HepG2 (cell line): ENCODE measurements at regions of chrX and their contacts with region 1.

Region 1: GRCh38 chrX:23782863-23783568 is at the start of gene SAT1:
- DNase-seq: peak; percentile 88
- ATAC-seq: peak; percentile 95
- H3K4me3 ChIP-seq: peak within 1 kb of the TSS; percentile 87 to 93 (median 88)
- H3K27ac ChIP-seq: peak within 1 kb of the TSS; percentile 82
- H3K4me1 ChIP-seq: peaks cover 33% of the 10 kb centered on the region
- H3K27me3 ChIP-seq: no peaks in the 10 kb centered on the region; a peak in 1 of 5 replicates
- CTCF ChIP-seq: peak; percentile 84
- EP300 ChIP-seq: no peak
- POLR2A ChIP-seq: peak; percentile 98 to 99
- RAD21 ChIP-seq: peak; percentile 86
- total RNA-seq, gene SAT1: 216 and 237 TPM in 2 replicates

Region 2: DNA sequence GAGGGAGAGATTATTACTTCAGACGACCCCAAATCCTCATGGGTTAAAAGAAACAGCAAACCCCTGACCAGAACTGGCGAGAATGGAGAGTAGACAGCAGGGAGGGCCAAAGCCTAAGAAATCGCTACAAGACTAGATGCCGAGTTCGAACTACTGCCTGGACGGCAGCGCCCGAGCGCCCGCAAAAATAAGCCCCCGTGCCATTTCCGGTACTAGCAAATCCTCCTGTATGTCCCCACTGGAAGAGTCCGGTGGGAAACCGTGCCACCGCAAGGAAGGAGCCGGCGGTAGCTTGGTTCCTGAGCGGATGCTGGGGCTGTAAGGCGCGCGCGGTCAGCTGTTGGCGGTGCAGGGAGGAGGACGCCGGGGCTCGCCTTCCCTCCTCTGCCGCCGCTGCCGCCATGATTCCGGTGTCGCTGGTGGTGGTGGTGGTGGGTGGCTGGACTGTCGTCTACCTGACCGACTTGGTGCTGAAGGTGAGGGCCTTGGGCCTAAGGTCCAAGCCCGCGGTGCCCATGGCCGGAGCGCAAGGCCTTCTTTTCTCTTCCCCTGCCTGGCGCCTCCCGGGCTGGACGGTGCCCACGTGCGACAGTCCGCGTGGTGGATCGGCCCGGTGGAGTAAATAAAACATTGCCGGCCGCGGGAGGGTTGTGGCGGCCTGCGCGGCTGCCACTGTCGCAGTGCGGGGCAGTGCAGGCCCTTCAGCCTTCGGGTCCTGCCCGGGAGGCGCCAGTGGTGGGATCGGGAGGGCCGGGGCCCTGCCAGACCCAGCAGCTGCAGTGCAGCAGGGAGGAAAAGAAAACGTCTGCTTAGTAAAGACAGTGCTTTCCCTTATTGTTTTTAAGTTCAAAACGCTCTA is 1943.5 kb before region 1 on chrX and contains the start of gene MBTPS2:
- CTCF ChIA-PET with region 1: no interaction called
- POLR2A ChIA-PET with region 1: no interaction called
- in situ Hi-C with region 1: no loop called
- intact Hi-C with region 1: loop called (anchors 10 kb)
- DNase-seq: peak; percentile 69
- ATAC-seq: peak; percentile 92
- H3K4me3 ChIP-seq: peak within 1 kb of the TSS; percentile 74 to 87 (median 83)
- H3K27ac ChIP-seq: peak within 1 kb of the TSS; percentile 78
- H3K4me1 ChIP-seq: peaks cover 31% of the 10 kb centered on the region
- H3K27me3 ChIP-seq: no peaks in the 10 kb centered on the region
- CTCF ChIP-seq: peak; percentile 37; the same call in 1 of the 2 replicates
- EP300 ChIP-seq: no peak
- POLR2A ChIP-seq: peak; percentile 58 to 75
- RAD21 ChIP-seq: peak; percentile 43; the same call in 1 of the 2 replicates
- total RNA-seq, gene MBTPS2: 5.7 and 7.7 TPM in 2 replicates

Region 3: GRCh38 chrX:23251043-23251442 is 532.0 kb before region 1 on chrX:
- CTCF ChIA-PET with region 1: no interaction called
- POLR2A ChIA-PET with region 1: no interaction called
- in situ Hi-C with region 1: no loop called
- intact Hi-C with region 1: no loop called
- DNase-seq: no peak
- ATAC-seq: no peak
- H3K4me3 ChIP-seq: no peak overlapping the region
- H3K27ac ChIP-seq: no peak overlapping the region
- H3K4me1 ChIP-seq: no peaks in the 10 kb centered on the region
- H3K27me3 ChIP-seq: no peaks in the 10 kb centered on the region
- CTCF ChIP-seq: no peak
- EP300 ChIP-seq: no peak
- POLR2A ChIP-seq: no peak
- RAD21 ChIP-seq: no peak

Region 4: GRCh38 chrX:23742697-23743622 is 40.1 kb before region 1 on chrX and contains the start of gene ACOT9:
- CTCF ChIA-PET with region 1: no interaction called
- POLR2A ChIA-PET with region 1: interaction called, 12 read pairs
- in situ Hi-C with region 1: no loop called
- intact Hi-C with region 1: no loop called
- DNase-seq: peak; percentile 88
- ATAC-seq: peak; percentile 98
- H3K4me3 ChIP-seq: peak within 1 kb of the TSS; percentile 79
- H3K27ac ChIP-seq: peak within 1 kb of the TSS; percentile 62
- H3K4me1 ChIP-seq: peaks cover 10% of the 10 kb centered on the region; the same call in 1 of the 2 replicates
- H3K27me3 ChIP-seq: no peaks in the 10 kb centered on the region
- CTCF ChIP-seq: peak; percentile 3; the same call in 1 of the 2 replicates
- EP300 ChIP-seq: no peak
- POLR2A ChIP-seq: peak; percentile 48 to 64
- RAD21 ChIP-seq: no peak
- total RNA-seq, gene ACOT9: 35.1 and 36.9 TPM in 2 replicates

Region 5: GRCh38 chrX:23770142-23770541 is 12.9 kb before region 1 on chrX:
- CTCF ChIA-PET with region 1: no interaction called
- POLR2A ChIA-PET with region 1: interaction called, 11 read pairs
- in situ Hi-C with region 1: no loop called
- intact Hi-C with region 1: no loop called
- DNase-seq: no peak
- ATAC-seq: peak; percentile 74
- H3K4me3 ChIP-seq: no peak overlapping the region
- H3K27ac ChIP-seq: peak overlapping the region; percentile 51
- H3K4me1 ChIP-seq: peaks cover 27% of the 10 kb centered on the region
- H3K27me3 ChIP-seq: no peaks in the 10 kb centered on the region
- CTCF ChIP-seq: no peak
- EP300 ChIP-seq: no peak
- POLR2A ChIP-seq: no peak
- RAD21 ChIP-seq: no peak

Region 6: DNA sequence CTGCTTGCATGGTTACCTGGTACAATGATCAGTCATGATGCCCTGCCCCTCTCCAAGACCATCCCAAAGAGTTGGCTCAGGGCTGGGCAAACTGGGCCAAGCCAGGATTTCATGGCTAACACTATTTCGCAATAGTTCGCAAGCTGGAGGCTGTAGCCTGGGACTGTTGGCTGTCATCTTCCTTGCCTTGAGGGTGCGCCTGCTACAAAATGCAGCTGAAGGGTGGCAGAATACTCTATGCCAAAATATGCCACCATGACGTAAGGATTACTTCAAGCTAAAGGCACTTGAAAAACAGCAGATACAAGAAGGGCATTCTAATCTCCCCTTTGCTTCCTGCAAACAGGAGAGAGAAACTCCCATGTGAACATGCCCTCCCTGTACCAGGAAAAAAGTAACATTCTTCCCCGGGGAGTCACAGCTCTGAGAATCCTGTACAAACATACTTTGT is 20.9 kb after region 1 on chrX:
- CTCF ChIA-PET with region 1: no interaction called
- POLR2A ChIA-PET with region 1: interaction called, 42 read pairs
- in situ Hi-C with region 1: no loop called
- intact Hi-C with region 1: no loop called
- DNase-seq: peak; percentile 70
- ATAC-seq: peak; percentile 30; the same call in 2 of the 3 replicates
- H3K4me3 ChIP-seq: no peak overlapping the region
- H3K27ac ChIP-seq: peak overlapping the region; percentile 65
- H3K4me1 ChIP-seq: peaks cover 46% of the 10 kb centered on the region
- H3K27me3 ChIP-seq: no peaks in the 10 kb centered on the region
- CTCF ChIP-seq: no peak
- EP300 ChIP-seq: 0 out of 4 replicates have a peak, but pooled peaks of 1 of the 2 experiments have one; percentile 9
- POLR2A ChIP-seq: no peak
- RAD21 ChIP-seq: no peak

Region 7: GRCh38 chrX:23844502-23845138 is 61.6 kb after region 1 on chrX:
- CTCF ChIA-PET with region 1: no interaction called
- POLR2A ChIA-PET with region 1: interaction called, 45 read pairs
- in situ Hi-C with region 1: no loop called
- intact Hi-C with region 1: loop called (anchors 2 kb)
- DNase-seq: peak; percentile 65
- ATAC-seq: peak; percentile 63
- H3K4me3 ChIP-seq: peak overlapping the region in 2 of 3 experiments; percentile 20 to 55; a peak in 3 of 6 replicates
- H3K27ac ChIP-seq: peak overlapping the region; percentile 93
- H3K4me1 ChIP-seq: peaks cover 63% of the 10 kb centered on the region
- H3K27me3 ChIP-seq: no peaks in the 10 kb centered on the region
- CTCF ChIP-seq: no peak
- EP300 ChIP-seq: peak in 1 of 2 experiments; percentile 81; a peak in 2 of 4 replicates
- POLR2A ChIP-seq: no peak
- RAD21 ChIP-seq: no peak

Region 8: GRCh38 chrX:23901805-23902204 is 118.8 kb after region 1 on chrX:
- CTCF ChIA-PET with region 1: interaction called, 27 read pairs
- POLR2A ChIA-PET with region 1: interaction called, 91 read pairs
- in situ Hi-C with region 1: loop called (anchors 5 kb)
- intact Hi-C with region 1: loop called (anchors 1 kb)
- DNase-seq: peak; percentile 77
- ATAC-seq: peak; percentile 96
- H3K4me3 ChIP-seq: peak overlapping the region in 1 of 3 experiments; percentile 33; a peak in 1 of 6 replicates
- H3K27ac ChIP-seq: peak overlapping the region; percentile 64
- H3K4me1 ChIP-seq: peaks cover 66% of the 10 kb centered on the region
- H3K27me3 ChIP-seq: no peaks in the 10 kb centered on the region
- CTCF ChIP-seq: peak; percentile 82
- EP300 ChIP-seq: no peak
- POLR2A ChIP-seq: no peak
- RAD21 ChIP-seq: peak; percentile 81

Region 9: DNA sequence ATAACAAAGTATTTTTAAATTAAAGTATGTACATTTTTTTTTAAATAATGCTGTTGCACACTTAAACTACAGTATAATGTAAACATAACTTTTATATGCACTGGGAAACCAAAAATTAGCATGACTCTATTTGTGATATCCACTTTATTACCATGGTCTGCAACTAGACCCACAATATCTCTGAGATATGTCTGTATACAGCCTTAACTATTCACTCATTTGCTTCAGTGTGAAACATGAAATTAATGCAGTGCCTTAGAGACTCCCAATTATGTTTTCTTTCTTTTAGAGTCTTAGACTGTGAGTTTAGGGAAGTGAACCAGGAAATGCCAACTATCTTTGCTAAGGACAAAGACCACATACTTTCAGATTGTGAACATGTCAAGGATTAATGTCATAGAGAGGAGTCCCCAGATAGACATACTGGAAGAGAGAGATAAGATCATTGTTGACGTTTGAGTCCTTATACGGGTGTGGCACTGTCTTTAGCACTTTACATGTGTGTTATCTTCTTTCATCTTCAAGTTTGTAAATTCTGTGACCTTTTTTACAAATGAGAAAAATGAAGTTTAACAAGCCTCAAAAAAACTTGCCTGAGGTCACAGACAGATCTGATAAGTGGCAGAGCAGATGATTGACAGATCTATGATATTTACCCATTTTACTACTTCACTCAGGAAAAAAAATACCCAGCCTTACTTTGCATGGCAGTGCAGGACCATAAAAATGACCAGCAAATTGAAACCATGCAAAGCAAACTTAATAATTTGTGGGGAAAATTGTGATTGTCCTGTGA is 148.1 kb after region 1 on chrX:
- CTCF ChIA-PET with region 1: no interaction called
- POLR2A ChIA-PET with region 1: no interaction called
- in situ Hi-C with region 1: no loop called
- intact Hi-C with region 1: no loop called
- DNase-seq: no peak
- ATAC-seq: no peak
- H3K4me3 ChIP-seq: no peak overlapping the region
- H3K27ac ChIP-seq: no peak overlapping the region
- H3K4me1 ChIP-seq: 0 out of 2 replicates have a peak, but pooled peaks cover 7% of the 10 kb centered on the region
- H3K27me3 ChIP-seq: no peaks in the 10 kb centered on the region
- CTCF ChIP-seq: no peak
- EP300 ChIP-seq: no peak
- POLR2A ChIP-seq: no peak
- RAD21 ChIP-seq: no peak